Activated CD4-positive, alpha-beta T cell treated with anti-CD3 and anti-CD28 coated beads, Interleukin-2, amount 10 ng/mL, durations not matched to agents 24 days and 14 days (primary cell): ENCODE measurements at regions of chr19 and their contacts with region 1.

Region 1: DNA sequence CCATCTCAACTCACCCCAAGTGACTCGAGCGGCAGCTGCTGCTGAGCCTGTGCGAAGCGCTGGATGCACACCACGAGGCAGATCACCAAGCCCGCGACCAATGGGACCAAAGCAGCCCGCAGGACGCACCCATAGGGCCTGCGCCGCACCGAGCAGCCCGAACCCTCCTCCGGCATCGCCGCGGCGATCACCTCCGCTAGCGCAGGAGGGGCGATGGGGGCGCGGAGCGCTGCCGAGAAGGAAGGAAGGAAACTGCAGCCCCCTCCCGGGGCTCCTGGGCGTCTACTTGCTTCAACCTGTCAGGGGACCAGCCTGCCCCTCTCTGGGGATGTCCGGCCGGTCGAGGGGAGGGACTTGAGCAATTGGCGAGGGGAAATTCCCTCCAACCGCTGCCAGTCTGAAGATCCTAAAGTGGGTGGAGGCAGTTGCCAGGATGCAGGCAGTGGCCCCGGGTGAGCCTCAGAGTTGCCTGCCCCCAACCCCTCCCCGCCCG is at the start of gene CD70:
- DNase-seq: peak; percentile 89
- H3K4me3 Mint-ChIP-seq: peak within 1 kb of the TSS; percentile 91
- H3K27ac Mint-ChIP-seq: peak within 1 kb of the TSS; percentile 79
- H3K4me1 Mint-ChIP-seq: peaks cover 60% of the 10 kb centered on the region
- H3K27me3 Mint-ChIP-seq: peaks cover 44% of the 10 kb centered on the region
- total RNA-seq, gene CD70: 46.8 and 47.4 TPM in 2 replicates

Region 2: GRCh38 chr19:6530386-6531161 is 60.3 kb before region 1 on chr19 and contains the start of gene TNFSF9:
- intact Hi-C with region 1: loop called (anchors 5 kb)
- DNase-seq: peak; percentile 95
- H3K4me3 Mint-ChIP-seq: peak within 1 kb of the TSS; percentile 87
- H3K27ac Mint-ChIP-seq: peak within 1 kb of the TSS; percentile 84
- H3K4me1 Mint-ChIP-seq: peaks cover 31% of the 10 kb centered on the region
- H3K27me3 Mint-ChIP-seq: peaks cover 36% of the 10 kb centered on the region
- total RNA-seq, gene TNFSF9: 6.1 and 6.4 TPM in 2 replicates

Region 3: GRCh38 chr19:6556480-6557195 is 34.2 kb before region 1 on chr19:
- intact Hi-C with region 1: loop called (anchors 2 kb)
- DNase-seq: peak; percentile 67
- H3K4me3 Mint-ChIP-seq: no peak overlapping the region
- H3K27ac Mint-ChIP-seq: no peak overlapping the region
- H3K4me1 Mint-ChIP-seq: peaks cover 3% of the 10 kb centered on the region
- H3K27me3 Mint-ChIP-seq: peaks cover 9% of the 10 kb centered on the region

Region 4: DNA sequence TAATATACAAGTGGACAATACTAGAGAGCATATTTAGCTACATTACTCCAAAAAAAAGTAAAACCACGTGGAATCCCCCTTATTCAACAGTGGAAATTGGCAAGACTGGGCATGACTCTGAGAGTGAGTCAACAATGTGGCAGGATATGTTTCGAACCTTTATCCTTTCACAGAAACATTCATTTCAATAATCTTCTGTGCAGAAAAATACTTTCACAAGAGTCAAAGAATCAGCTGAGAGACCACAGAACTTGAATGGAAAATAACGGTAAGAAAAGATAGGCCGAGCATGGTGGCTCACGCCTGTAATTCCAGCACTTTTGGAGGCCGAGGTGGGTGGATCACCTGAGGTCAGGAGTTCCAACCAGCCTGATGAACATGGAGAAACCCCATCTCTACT is 25.1 kb after region 1 on chr19:
- intact Hi-C with region 1: loop called (anchors 1 kb)
- DNase-seq: peak; percentile 68
- H3K4me3 Mint-ChIP-seq: no peak overlapping the region
- H3K27ac Mint-ChIP-seq: peak overlapping the region; percentile 73
- H3K4me1 Mint-ChIP-seq: peaks cover 22% of the 10 kb centered on the region
- H3K27me3 Mint-ChIP-seq: peaks cover 25% of the 10 kb centered on the region

Region 5: GRCh38 chr19:6632002-6632621 is 41.2 kb after region 1 on chr19:
- intact Hi-C with region 1: loop called (anchors 5 kb)
- DNase-seq: peak; percentile 96
- H3K4me3 Mint-ChIP-seq: no peak overlapping the region
- H3K27ac Mint-ChIP-seq: no peak overlapping the region
- H3K4me1 Mint-ChIP-seq: peaks cover 26% of the 10 kb centered on the region
- H3K27me3 Mint-ChIP-seq: peaks cover 2% of the 10 kb centered on the region